HEK293T (cell line): ENCODE measurements at regions of chr12 and their contacts with region 1.

Region 1: DNA sequence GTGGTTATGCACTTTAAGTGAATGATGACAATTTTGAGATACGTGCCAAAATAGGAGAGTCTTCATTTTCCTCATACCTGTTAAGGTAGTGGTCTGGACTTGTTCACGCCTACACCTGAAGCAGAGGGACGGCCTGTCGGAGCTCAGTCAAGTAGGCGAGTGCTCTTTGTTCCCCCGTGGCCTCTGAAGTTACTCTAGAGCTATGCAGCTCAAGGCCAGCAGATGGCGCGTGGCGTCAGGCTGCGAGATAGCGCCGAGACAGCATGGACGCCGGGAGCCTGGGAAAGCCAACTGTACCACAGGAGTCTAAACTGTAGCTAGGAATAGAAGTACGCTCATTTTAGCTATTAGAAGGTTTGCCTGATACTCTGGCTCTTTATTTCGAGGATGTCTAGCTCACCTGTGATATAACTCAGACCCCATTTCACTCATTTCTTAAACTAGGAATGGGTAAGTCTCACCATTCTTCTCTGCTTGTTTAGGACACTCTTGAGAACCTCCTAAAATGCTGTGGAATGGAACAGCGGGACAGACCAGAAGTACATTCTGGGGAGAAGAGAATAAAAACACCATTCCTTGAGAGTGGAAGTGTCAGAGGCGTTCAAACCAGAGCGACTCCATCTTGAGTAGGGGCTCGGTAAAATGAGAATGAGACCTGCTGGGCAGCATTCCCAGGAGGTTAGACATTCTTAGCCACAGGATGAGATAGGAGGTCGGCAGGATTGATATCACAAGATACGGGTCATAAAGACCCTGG is 267.4 kb upstream of the HMGA2 start:
- DNase-seq: peak; percentile 86

Region 2: GRCh38 chr12:65532764-65533163 is 24.1 kb before region 1 on chr12:
- CTCF ChIA-PET with region 1: interaction called, 15 read pairs
- POLR2A ChIA-PET with region 1: no interaction called
- DNase-seq: peak; percentile 53